Left cardiac atrium (tissue), 4 donors: ENCODE measurements at regions of chr16 and their contacts with region 1.

Region 1: GRCh38 chr16:50160495-50161164 is 7.5 kb downstream of the TENT4B start:
- DNase-seq: no peak
- ATAC-seq: peak in 1 of 2 donors; percentile 63

Region 2: DNA sequence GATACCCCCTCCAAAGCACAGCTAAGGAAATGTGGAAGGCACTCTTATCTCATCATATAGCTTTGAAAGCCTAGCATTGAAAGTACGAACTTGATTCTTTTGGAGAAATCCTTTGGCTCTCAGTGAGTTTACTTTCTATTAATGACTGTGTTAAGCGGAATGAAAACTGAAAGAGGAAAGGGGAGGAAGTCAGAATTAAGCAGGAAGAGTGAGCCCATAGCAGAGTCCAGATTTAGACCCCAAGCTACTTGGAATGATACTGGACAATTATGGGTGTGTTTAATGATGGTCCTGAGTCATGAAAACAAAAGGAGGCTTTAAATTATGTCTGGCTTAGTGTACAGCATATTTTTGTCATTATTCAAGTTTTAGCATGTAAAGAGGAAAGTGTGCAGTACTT is 34.6 kb after region 1 on chr16:
- intact Hi-C with region 1: loop called in 1 of 2 experiments (anchors 5 kb)
- DNase-seq: no peak
- ATAC-seq: peak in 1 of 2 donors; percentile 43

Region 3: GRCh38 chr16:50281964-50282538 is 121.4 kb after region 1 on chr16:
- intact Hi-C with region 1: no loop called
- DNase-seq: peak; percentile 69
- ATAC-seq: peak; percentile 74 to 76

Region 4: DNA sequence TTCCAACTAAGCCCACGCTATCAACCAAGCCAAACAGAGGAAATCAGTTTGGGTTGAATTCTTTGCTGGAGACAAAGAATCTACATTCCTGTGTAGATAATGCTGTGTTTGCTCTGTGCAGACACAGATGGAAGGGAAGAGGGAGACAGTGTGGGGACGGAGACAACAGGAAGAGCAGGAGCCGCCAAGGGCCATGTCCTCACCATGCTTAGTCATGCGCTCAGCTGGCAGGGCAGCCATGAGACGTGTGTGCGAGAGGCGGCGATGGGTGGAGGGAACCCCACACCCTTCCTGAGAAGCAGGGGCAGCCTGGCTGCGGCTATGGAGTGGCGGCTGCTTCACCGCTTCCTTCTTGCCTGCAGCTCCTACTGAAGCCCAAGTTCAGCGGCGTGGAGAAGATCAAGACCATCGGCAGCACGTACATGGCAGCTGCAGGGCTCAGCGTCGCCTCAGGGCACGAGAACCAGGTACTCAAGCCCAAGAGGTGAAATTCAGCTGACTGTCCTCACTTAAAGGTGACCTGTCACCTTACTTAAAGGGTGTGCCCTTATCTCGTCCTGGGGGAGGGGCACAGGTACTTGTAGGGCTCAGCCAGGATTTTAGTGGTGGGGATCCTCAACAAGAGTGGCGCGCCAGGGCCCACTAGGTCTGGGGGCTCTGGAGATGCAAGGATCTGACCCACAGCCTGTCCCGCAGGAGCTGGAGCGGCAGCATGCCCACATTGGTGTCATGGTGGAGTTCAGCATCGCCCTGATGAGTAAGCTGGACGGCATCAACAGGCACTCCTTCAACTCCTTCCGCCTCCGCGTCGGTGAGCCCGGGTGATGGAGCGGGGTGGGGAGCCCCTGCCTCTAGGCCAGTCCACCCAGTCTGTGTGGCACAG is 153.2 kb after region 1 on chr16:
- intact Hi-C with region 1: no loop called
- DNase-seq: peak; percentile 85
- ATAC-seq: peak; percentile 62 to 83